ENCODE measurements at regions of chr5 and their contacts with region 1.

Region 1: GRCh38 chr5:69042915-69043658 is 50.7 kb upstream of the SLC30A5 start:
- DNase-seq: peak; percentile 61 to 69
- ATAC-seq: peak; percentile 97
- H3K4me3 ChIP-seq: peak overlapping the region; percentile 50 to 69 (median 58)
- H3K27ac ChIP-seq: peak overlapping the region; percentile 65 to 77 (median 68)
- H3K4me1 ChIP-seq: no peaks in the 10 kb centered on the region
- H3K27me3 ChIP-seq: no peaks in the 10 kb centered on the region
- CTCF ChIP-seq: peak; percentile 77 to 85 (median 82)
- POLR2A ChIP-seq: no peak

Region 2: GRCh38 chr5:68924490-68925145 is 118.5 kb before region 1 on chr5:
- in situ Hi-C with region 1: no loop called
- intact Hi-C with region 1: no loop called
- DNase-seq: peak in 1 of 2 donors; percentile 19
- ATAC-seq: no peak
- H3K4me3 ChIP-seq: no peak overlapping the region
- H3K27ac ChIP-seq: no peak overlapping the region
- H3K4me1 ChIP-seq: no peaks in the 10 kb centered on the region
- H3K27me3 ChIP-seq: no peaks in the 10 kb centered on the region
- CTCF ChIP-seq: no peak
- POLR2A ChIP-seq: no peak

Region 3: DNA sequence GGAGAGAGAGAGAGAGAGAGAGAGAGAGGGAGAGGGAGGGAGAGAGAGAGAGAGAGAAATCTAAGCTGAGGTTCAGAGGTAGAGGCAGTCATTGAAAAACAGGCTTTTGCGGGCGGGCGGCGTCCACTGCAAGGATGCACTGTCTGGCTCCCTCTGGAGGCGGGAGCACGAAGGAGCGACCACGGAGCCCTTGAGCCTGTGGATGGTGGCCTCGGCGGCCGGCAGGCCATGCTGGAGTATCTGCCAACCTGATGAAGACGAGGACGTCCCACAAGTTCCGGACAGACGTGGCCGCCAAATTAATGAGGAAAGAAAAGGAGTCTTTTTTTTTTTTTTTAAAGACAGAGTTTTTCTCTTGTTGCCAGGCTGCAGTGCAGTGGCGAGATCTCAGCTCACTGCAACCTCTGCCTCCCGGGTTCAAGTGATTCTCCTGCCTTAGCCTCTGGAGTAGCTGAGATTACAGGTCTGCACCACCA is 291.7 kb after region 1 on chr5:
- in situ Hi-C with region 1: loop called in 1 of 4 experiments (anchors 10 kb)
- intact Hi-C with region 1: loop called (anchors 2 kb)
- DNase-seq: peak; percentile 60 to 78
- ATAC-seq: peak; percentile 79 to 86
- H3K4me3 ChIP-seq: peak overlapping the region in 2 of 4 donors; percentile 15 to 16
- H3K27ac ChIP-seq: peak overlapping the region; percentile 14 to 68 (median 49)
- H3K4me1 ChIP-seq: peaks cover 8 to 15% of the 10 kb centered on the region in 2 donors
- H3K27me3 ChIP-seq: no peaks in the 10 kb centered on the region
- CTCF ChIP-seq: peak; percentile 46 to 82 (median 72)
- POLR2A ChIP-seq: no peak